GM12878 (cell line): ENCODE measurements at regions of chr18 and their contacts with region 1.

Region 1: GRCh38 chr18:21851327-21851972 is 110.9 kb downstream of the MIB1 start:
- DNase-seq: no peak
- ATAC-seq: peak; percentile 65
- H3K4me3 ChIP-seq: no peak overlapping the region
- H3K27ac ChIP-seq: no peak overlapping the region
- H3K4me1 ChIP-seq: peaks cover 13% of the 10 kb centered on the region
- H3K27me3 ChIP-seq: no peaks in the 10 kb centered on the region
- CTCF ChIP-seq: peak in 2 of 3 experiments; percentile 38 to 50; a peak in 4 of 6 replicates
- EP300 ChIP-seq: no peak
- POLR2A ChIP-seq: no peak
- RAD21 ChIP-seq: peak; percentile 78

Region 2: GRCh38 chr18:21489119-21489750 is 362.2 kb before region 1 on chr18:
- CTCF ChIA-PET with region 1: interaction called, 11 read pairs
- POLR2A ChIA-PET with region 1: no interaction called
- RAD21 ChIA-PET with region 1: interaction called, 9 read pairs
- SMC1A ChIA-PET with region 1: interaction called, 3 read pairs
- in situ Hi-C with region 1: no loop called
- intact Hi-C with region 1: loop called (anchors 2 kb)
- DNase-seq: no peak
- ATAC-seq: peak; percentile 90
- H3K4me3 ChIP-seq: no peak overlapping the region
- H3K27ac ChIP-seq: no peak overlapping the region
- H3K4me1 ChIP-seq: no peaks in the 10 kb centered on the region
- H3K27me3 ChIP-seq: no peaks in the 10 kb centered on the region
- CTCF ChIP-seq: peak; percentile 73 to 76 (median 75)
- EP300 ChIP-seq: no peak
- POLR2A ChIP-seq: no peak
- RAD21 ChIP-seq: peak; percentile 73

Region 3: GRCh38 chr18:21612125-21612991 is 239.1 kb before region 1 on chr18 and contains the start of gene SNRPD1:
- CTCF ChIA-PET with region 1: interaction called, 5 read pairs
- POLR2A ChIA-PET with region 1: no interaction called
- RAD21 ChIA-PET with region 1: interaction called, 4 read pairs
- SMC1A ChIA-PET with region 1: no interaction called
- in situ Hi-C with region 1: no loop called
- intact Hi-C with region 1: loop called (anchors 10 kb)
- DNase-seq: peak; percentile 71
- ATAC-seq: peak; percentile 98
- H3K4me3 ChIP-seq: peak within 1 kb of the TSS; percentile 83
- H3K27ac ChIP-seq: peak within 1 kb of the TSS; percentile 95
- H3K4me1 ChIP-seq: no peaks in the 10 kb centered on the region
- H3K27me3 ChIP-seq: no peaks in the 10 kb centered on the region
- CTCF ChIP-seq: peak; percentile 97 to 98 (median 98)
- EP300 ChIP-seq: no peak
- POLR2A ChIP-seq: peak; percentile 98
- RAD21 ChIP-seq: peak; percentile 43
- polyA plus RNA-seq, gene SNRPD1: 842 to 866 TPM

Region 4: DNA sequence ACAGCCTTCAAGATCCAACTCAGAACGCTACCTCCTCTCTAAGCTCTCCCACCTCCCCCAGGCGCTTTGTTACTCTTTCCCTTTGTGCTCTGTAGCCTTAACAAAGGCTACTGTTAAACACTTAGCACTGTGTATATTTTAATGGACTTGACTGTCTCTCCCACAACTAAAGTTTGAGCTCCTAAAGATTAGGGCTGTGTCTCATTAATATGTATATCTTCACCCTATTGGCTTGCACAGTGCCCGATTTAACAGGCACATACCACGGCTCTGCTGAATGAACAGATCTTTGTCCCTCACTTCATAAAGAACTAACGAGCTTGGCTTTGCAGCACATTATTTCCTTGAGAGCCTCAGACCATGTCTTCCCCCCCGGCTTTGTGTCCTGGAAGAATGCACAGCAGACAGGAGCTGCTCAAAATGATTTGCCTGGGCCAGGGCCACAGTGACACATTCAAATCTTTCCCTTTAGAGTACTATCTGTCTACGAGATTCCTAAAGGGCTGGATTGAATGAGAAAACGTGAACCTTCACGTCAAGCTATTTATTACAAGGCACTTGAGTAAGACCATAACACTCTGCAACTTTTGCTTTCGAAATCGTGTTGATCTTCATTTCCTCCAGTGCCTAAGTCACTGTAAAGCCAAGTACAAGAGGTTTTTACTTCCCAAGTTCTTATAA is 168.9 kb before region 1 on chr18:
- CTCF ChIA-PET with region 1: no interaction called
- POLR2A ChIA-PET with region 1: no interaction called
- RAD21 ChIA-PET with region 1: no interaction called
- SMC1A ChIA-PET with region 1: interaction called, 3 read pairs
- in situ Hi-C with region 1: no loop called
- intact Hi-C with region 1: loop called (anchors 10 kb)
- DNase-seq: peak; percentile 39
- ATAC-seq: peak; percentile 32; the same call in 2 of the 3 replicates
- H3K4me3 ChIP-seq: no peak overlapping the region
- H3K27ac ChIP-seq: peak overlapping the region; percentile 70
- H3K4me1 ChIP-seq: peaks cover 23% of the 10 kb centered on the region
- H3K27me3 ChIP-seq: no peaks in the 10 kb centered on the region
- CTCF ChIP-seq: no peak
- EP300 ChIP-seq: no peak
- POLR2A ChIP-seq: no peak
- RAD21 ChIP-seq: no peak